CD8-positive, alpha-beta memory T cell (primary cell): ENCODE measurements at regions of chr5 and their contacts with region 1.

Region 1: DNA sequence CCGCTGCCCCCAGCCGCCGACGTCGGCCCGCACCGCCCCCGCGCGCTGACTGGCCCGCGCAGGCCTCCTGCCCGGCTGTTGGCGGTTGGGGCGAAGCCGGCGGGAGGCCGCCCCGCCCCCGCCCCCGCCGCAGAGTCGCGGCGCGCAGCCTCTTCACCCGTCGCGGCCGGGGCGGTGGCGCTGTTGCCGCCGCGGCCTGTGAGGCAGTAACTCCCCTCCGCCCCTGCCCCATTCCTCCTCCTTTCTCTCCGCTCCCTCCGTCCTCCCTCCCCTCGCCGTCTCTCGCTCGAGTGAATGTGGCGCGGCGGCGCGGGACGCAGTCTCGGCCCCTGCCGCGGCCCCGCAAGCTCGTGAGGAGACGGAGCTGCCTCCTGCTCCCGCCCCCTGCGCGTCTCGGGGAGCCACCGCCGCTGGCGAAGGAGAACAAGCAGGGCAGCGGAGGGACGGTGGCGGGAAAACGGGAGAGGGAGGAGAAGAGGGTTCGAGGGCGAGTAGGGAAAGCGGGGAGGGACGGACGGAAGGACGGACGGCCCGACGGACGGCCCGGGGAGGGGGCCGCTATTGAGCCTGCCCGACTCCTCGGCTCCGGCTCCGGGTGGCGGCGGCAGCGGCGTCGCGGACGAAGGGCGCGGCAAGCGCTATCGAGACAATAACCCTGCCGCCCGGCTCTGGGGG is 637 bp upstream of the ERBIN start:
- DNase-seq: peak; percentile 73 to 86 (median 83)
- H3K4me3 ChIP-seq: peak overlapping the region; percentile 73
- H3K4me3 Mint-ChIP-seq: peak overlapping the region; percentile 90 to 99 (median 92)
- H3K27ac ChIP-seq: peak overlapping the region; percentile 90
- H3K27ac Mint-ChIP-seq: peak overlapping the region; percentile 86 to 98 (median 95)
- H3K4me1 ChIP-seq: peaks cover 37% of the 10 kb centered on the region
- H3K4me1 Mint-ChIP-seq: peaks cover 36 to 53% (median 53%) of the 10 kb centered on the region in 3 donors
- H3K27me3 ChIP-seq: no peaks in the 10 kb centered on the region
- H3K27me3 Mint-ChIP-seq: peaks cover 0 to 5% of the 10 kb centered on the region in 2 donors

Region 2: GRCh38 chr5:66144074-66144833 is 218.5 kb after region 1 on chr5 and contains the start of gene SREK1:
- CTCF ChIA-PET with region 1: no interaction called
- POLR2A ChIA-PET with region 1: interaction called, 16 read pairs
- DNase-seq: peak; percentile 83 to 90 (median 87)
- H3K4me3 ChIP-seq: peak within 1 kb of the TSS; percentile 70
- H3K4me3 Mint-ChIP-seq: peak within 1 kb of the TSS; percentile 98 to 100 (median 99)
- H3K27ac ChIP-seq: peak within 1 kb of the TSS; percentile 99
- H3K27ac Mint-ChIP-seq: peak within 1 kb of the TSS; percentile 99 to 100 (median 100)
- H3K4me1 ChIP-seq: peaks cover 39% of the 10 kb centered on the region
- H3K4me1 Mint-ChIP-seq: peaks cover 31 to 61% (median 40%) of the 10 kb centered on the region in 3 donors
- H3K27me3 ChIP-seq: no peaks in the 10 kb centered on the region
- H3K27me3 Mint-ChIP-seq: peaks cover 0 to 4% of the 10 kb centered on the region in 2 donors
- total RNA-seq, gene SREK1: 51.1 to 54.7 TPM